CD4-positive, alpha-beta T cell (primary cell): ENCODE measurements at regions of chr14 and their contacts with region 1.

Region 1: DNA sequence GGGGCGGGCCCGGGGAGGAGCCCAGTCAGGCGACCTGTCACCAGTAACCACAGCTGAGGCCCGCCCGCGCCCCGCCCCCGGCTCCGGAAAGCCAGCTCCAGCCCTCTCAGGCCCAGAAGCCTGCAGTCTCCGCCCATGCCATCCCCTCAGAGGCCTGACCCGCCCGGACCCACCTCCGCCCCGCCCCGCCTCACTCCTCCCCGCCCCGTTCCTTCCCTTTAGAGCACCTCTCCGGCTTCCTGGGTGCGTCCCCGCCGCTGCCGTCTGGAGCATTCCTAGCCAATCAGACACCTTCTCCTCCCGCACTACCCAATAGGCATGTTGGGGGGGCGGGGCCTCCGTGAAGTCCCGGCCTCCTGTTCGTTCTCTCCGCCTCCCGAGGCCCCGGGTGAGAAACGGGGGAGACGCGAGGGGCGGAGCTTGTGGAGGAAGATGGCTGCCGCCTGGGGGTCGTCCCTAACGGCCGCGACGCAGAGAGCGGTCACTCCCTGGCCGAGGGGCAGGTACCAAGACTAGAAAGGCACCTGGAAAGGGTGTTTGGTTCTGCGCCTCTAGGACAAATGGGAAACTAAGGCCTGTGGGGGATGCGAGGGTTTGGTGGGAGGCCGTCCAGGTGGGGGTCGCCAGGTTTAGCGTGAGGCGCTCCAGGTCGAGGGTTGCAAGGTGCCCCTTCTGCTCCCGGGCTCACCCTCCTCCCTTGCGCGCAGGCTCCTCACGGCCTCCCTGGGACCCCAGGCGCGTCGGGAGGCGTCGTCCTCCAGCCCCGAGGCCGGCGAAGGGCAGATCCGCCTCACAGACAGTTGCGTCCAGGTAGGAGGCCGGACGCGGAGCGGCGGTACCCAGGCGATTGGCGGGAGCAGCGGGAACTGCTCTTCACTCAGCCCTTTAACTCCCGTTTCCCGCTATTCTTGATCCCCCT is at the start of gene ISCA2:
- DNase-seq: peak; percentile 97 to 100 (median 99)
- ATAC-seq: peak; percentile 92
- H3K4me3 ChIP-seq: peak within 1 kb of the TSS; percentile 86
- H3K4me3 Mint-ChIP-seq: no peak within 1 kb of the TSS
- H3K27ac ChIP-seq: peak within 1 kb of the TSS; percentile 77 to 80
- H3K27ac Mint-ChIP-seq: no peak within 1 kb of the TSS
- H3K4me1 ChIP-seq: peaks cover 19% of the 10 kb centered on the region
- H3K4me1 Mint-ChIP-seq: peaks cover 35% of the 10 kb centered on the region
- H3K27me3 ChIP-seq: no peaks in the 10 kb centered on the region
- H3K27me3 Mint-ChIP-seq: no peaks in the 10 kb centered on the region
- CTCF ChIP-seq: no peak
- total RNA-seq, gene ISCA2: 22.5 to 23.7 TPM

Region 2: GRCh38 chr14:73644531-73645247 is 848.9 kb before region 1 on chr14 and contains the start of gene DNAL1:
- CTCF ChIA-PET with region 1: no interaction called
- POLR2A ChIA-PET with region 1: no interaction called
- intact Hi-C with region 1: loop called in 1 of 2 experiments (anchors 5 kb)
- DNase-seq: peak; percentile 82 to 96 (median 88)
- ATAC-seq: peak; percentile 99
- H3K4me3 ChIP-seq: peak within 1 kb of the TSS; percentile 88
- H3K4me3 Mint-ChIP-seq: peak within 1 kb of the TSS; percentile 91
- H3K27ac ChIP-seq: peak within 1 kb of the TSS; percentile 39 to 63
- H3K27ac Mint-ChIP-seq: peak within 1 kb of the TSS; percentile 76
- H3K4me1 ChIP-seq: peaks cover 13% of the 10 kb centered on the region
- H3K4me1 Mint-ChIP-seq: peaks cover 20% of the 10 kb centered on the region
- H3K27me3 ChIP-seq: no peaks in the 10 kb centered on the region
- H3K27me3 Mint-ChIP-seq: no peaks in the 10 kb centered on the region
- CTCF ChIP-seq: no peak
- total RNA-seq, gene DNAL1: 2.9 to 3.7 TPM

Region 3: GRCh38 chr14:74302634-74303577 is 190.7 kb before region 1 on chr14 and contains the start of gene ABCD4:
- CTCF ChIA-PET with region 1: no interaction called
- POLR2A ChIA-PET with region 1: interaction called, 4 read pairs
- intact Hi-C with region 1: loop called in 1 of 2 experiments (anchors 5 kb)
- DNase-seq: peak; percentile 68 to 91 (median 81)
- ATAC-seq: peak; percentile 70
- H3K4me3 ChIP-seq: peak within 1 kb of the TSS; percentile 96
- H3K4me3 Mint-ChIP-seq: peak within 1 kb of the TSS; percentile 97
- H3K27ac ChIP-seq: peak within 1 kb of the TSS; percentile 75 to 86
- H3K27ac Mint-ChIP-seq: peak within 1 kb of the TSS; percentile 87
- H3K4me1 ChIP-seq: peaks cover 33% of the 10 kb centered on the region
- H3K4me1 Mint-ChIP-seq: peaks cover 27% of the 10 kb centered on the region
- H3K27me3 ChIP-seq: no peaks in the 10 kb centered on the region
- H3K27me3 Mint-ChIP-seq: no peaks in the 10 kb centered on the region
- CTCF ChIP-seq: peak; percentile 53
- total RNA-seq, gene ABCD4: 59.6 to 63.0 TPM

Region 4: DNA sequence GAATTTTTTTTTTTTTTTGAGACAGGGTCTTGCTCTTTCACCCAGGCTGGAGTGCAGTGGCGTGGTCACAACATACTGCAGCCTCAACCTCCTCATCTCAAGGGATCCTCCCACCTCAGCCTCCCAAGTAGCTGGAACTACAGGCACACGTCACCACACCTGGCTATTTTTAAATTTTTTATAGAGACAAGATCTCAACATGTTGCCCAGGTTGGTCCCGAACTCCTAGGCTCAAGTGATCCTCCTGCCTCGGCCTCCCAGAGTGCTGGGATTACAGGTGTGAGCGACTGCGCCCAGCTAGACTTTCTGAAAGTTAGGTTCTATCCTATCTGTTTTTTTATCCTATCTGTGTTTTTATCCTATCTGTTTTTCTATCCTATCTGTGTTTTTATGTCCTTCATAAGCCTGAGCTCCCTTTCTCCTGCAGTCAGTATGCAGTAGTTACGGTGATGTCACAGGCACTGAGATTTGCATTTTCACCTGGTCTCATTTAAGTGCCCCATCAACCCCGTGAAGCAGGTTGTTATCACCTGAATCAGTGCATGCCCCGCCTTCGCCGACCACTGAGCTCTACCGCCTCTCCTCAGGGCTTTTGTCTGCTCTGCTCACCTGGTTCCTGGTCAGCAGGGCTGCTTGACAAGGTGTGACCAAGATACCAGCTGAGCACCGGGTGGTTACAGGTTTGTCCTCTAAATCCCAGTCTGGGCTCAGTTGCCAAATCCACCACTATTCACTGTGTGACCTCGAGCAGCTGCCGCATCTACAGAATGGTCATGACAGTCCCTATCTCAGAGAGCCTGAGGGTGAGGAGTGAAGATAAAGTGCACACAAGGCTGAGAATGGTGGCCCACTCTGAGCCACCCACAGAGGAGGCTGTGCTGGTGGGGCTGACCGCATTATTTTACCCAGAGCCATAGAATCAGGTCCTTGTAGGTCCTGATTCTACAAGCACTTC is 100.7 kb before region 1 on chr14:
- CTCF ChIA-PET with region 1: no interaction called
- POLR2A ChIA-PET with region 1: no interaction called
- intact Hi-C with region 1: no loop called
- DNase-seq: no peak
- ATAC-seq: no peak
- H3K4me3 ChIP-seq: no peak overlapping the region
- H3K4me3 Mint-ChIP-seq: no peak overlapping the region
- H3K27ac ChIP-seq: no peak overlapping the region
- H3K27ac Mint-ChIP-seq: no peak overlapping the region
- H3K4me1 ChIP-seq: no peaks in the 10 kb centered on the region
- H3K4me1 Mint-ChIP-seq: no peaks in the 10 kb centered on the region
- H3K27me3 ChIP-seq: no peaks in the 10 kb centered on the region
- H3K27me3 Mint-ChIP-seq: peaks cover 12% of the 10 kb centered on the region
- CTCF ChIP-seq: no peak

Region 5: DNA sequence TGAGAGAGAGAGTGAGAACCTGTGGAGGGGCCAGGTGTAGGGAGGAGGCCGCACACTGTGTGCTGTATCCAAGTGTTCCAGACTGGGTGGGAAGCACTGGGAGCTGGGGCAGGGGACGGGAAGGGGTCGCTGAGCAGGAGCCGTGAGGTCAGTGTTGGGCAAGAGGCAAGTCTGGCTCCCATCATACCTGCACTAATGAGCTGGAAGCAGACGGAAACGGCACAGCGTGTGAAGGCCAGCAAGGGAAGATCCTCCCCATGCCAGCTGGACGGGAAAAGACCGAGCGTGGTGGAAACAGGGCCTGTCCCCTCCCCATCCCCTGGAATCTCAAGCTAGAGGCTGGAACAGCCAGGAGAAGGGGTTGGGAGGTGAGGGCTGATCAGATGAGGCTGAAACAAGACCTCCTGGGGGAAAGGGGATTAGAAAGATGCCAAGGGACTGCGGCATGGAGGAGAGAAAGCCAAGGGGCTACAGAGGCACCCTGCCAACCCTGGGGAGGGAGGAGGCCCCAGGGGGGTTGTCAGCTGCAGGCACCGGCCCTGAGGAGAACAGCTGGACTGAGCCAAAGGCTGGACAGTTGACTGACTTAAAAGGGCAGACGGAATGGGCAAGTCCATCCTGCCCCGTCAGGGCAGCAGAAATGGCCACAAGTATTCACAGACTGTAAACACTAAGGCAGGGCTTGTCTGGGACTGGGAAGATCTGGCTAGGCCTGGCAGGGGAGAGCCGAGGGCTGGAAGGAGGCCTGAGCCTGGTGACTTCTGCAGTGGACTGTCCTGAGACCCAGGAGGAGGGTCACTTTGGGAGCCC is 137.5 kb after region 1 on chr14:
- CTCF ChIA-PET with region 1: no interaction called
- POLR2A ChIA-PET with region 1: no interaction called
- intact Hi-C with region 1: no loop called
- DNase-seq: no peak
- ATAC-seq: no peak
- H3K4me3 ChIP-seq: no peak overlapping the region
- H3K4me3 Mint-ChIP-seq: no peak overlapping the region
- H3K27ac ChIP-seq: no peak overlapping the region
- H3K27ac Mint-ChIP-seq: no peak overlapping the region
- H3K4me1 ChIP-seq: no peaks in the 10 kb centered on the region
- H3K4me1 Mint-ChIP-seq: no peaks in the 10 kb centered on the region
- H3K27me3 ChIP-seq: no peaks in the 10 kb centered on the region
- H3K27me3 Mint-ChIP-seq: peaks cover 3% of the 10 kb centered on the region
- CTCF ChIP-seq: no peak

Region 6: GRCh38 chr14:74712499-74713394 is 219.1 kb after region 1 on chr14 and contains the starts of genes AREL1 and FCF1:
- CTCF ChIA-PET with region 1: no interaction called
- POLR2A ChIA-PET with region 1: no interaction called
- intact Hi-C with region 1: loop called in 1 of 2 experiments (anchors 10 kb)
- DNase-seq: peak; percentile 62 to 93 (median 70)
- ATAC-seq: peak; percentile 92
- H3K4me3 ChIP-seq: peak within 1 kb of the TSS; percentile 76
- H3K4me3 Mint-ChIP-seq: peak within 1 kb of the TSS; percentile 90
- H3K27ac ChIP-seq: peak within 1 kb of the TSS; percentile 76 to 81
- H3K27ac Mint-ChIP-seq: peak within 1 kb of the TSS; percentile 92
- H3K4me1 ChIP-seq: peaks cover 12% of the 10 kb centered on the region
- H3K4me1 Mint-ChIP-seq: peaks cover 65% of the 10 kb centered on the region
- H3K27me3 ChIP-seq: no peaks in the 10 kb centered on the region
- H3K27me3 Mint-ChIP-seq: no peaks in the 10 kb centered on the region
- CTCF ChIP-seq: no peak
- total RNA-seq, gene AREL1: 30.6 to 35.9 TPM
- total RNA-seq, gene FCF1: 31.9 to 32.9 TPM

Region 7: GRCh38 chr14:75654127-75654732 is 1160.6 kb after region 1 on chr14:
- CTCF ChIA-PET with region 1: no interaction called
- POLR2A ChIA-PET with region 1: no interaction called
- intact Hi-C with region 1: loop called in 1 of 2 experiments (anchors 5 kb)
- DNase-seq: peak; percentile 64 to 91 (median 78)
- ATAC-seq: peak; percentile 98
- H3K4me3 ChIP-seq: no peak overlapping the region
- H3K4me3 Mint-ChIP-seq: no peak overlapping the region
- H3K27ac ChIP-seq: no peak overlapping the region
- H3K27ac Mint-ChIP-seq: no peak overlapping the region
- H3K4me1 ChIP-seq: peaks cover 2% of the 10 kb centered on the region
- H3K4me1 Mint-ChIP-seq: peaks cover 18% of the 10 kb centered on the region
- H3K27me3 ChIP-seq: no peaks in the 10 kb centered on the region
- H3K27me3 Mint-ChIP-seq: no peaks in the 10 kb centered on the region
- CTCF ChIP-seq: peak; percentile 94